Activated CD4-positive, alpha-beta T cell treated with anti-CD3 and anti-CD28 coated beads, Interleukin-2, amount 10 ng/mL, durations not matched to agents 24 days and 14 days (primary cell): ENCODE measurements at regions of chr16 and their contacts with region 1.

Region 1: DNA sequence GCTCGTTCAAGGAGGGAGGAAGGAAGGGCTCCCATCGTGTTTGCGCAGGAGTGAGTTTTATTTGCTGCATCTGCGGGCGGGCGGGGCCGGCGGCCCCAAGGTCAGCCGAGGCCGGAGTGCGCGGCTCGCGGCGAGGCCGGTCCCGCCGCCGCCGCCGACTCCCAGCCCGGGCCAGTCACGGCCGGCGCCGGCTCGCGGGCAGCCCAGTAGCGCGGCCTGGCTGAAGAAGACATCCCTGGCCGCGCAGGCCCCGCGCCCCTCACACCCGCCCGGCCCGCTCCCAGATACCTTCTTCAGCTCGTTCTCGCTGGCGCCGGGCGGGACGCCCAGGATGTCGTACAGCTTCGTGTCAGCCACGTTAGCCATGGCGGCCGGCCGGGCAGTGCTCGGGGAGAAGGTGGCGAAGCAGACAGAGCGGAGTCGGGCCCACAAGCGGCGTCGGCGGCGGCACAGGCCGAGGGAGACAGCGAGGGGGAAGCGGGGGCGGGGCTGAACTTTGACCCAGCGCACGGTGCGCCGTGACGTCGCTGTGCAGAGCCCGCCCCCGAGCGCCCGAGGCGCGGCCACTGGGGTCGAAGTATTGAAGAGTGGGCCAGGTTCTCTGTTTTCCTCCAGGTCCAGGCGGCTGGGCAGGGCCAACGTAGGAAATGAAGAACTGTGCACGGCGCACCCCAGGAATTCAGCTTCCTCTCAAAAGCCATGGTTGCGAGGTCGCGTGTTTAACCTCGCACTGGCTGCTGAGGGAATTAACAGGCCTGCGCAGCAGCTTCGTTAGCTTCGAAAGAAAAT is at the start of gene DNAJA2:
- DNase-seq: peak; percentile 97
- H3K4me3 Mint-ChIP-seq: peak within 1 kb of the TSS; percentile 98
- H3K27ac Mint-ChIP-seq: peak within 1 kb of the TSS; percentile 98
- H3K4me1 Mint-ChIP-seq: peaks cover 48% of the 10 kb centered on the region
- H3K27me3 Mint-ChIP-seq: no peaks in the 10 kb centered on the region
- total RNA-seq, gene DNAJA2: 81.7 and 84.2 TPM in 2 replicates

Region 2: GRCh38 chr16:46689365-46690280 is 283.8 kb before region 1 on chr16 and contains the start of gene ORC6:
- intact Hi-C with region 1: loop called (anchors 1 kb)
- DNase-seq: peak; percentile 99
- H3K4me3 Mint-ChIP-seq: no peak within 1 kb of the TSS
- H3K27ac Mint-ChIP-seq: no peak within 1 kb of the TSS
- H3K4me1 Mint-ChIP-seq: peaks cover 34% of the 10 kb centered on the region
- H3K27me3 Mint-ChIP-seq: no peaks in the 10 kb centered on the region
- total RNA-seq, gene ORC6: 64.3 and 66.3 TPM in 2 replicates

Region 3: GRCh38 chr16:46757339-46758050 is 215.9 kb before region 1 on chr16:
- intact Hi-C with region 1: no loop called
- DNase-seq: no peak
- H3K4me3 Mint-ChIP-seq: no peak overlapping the region
- H3K27ac Mint-ChIP-seq: no peak overlapping the region
- H3K4me1 Mint-ChIP-seq: no peaks in the 10 kb centered on the region
- H3K27me3 Mint-ChIP-seq: no peaks in the 10 kb centered on the region

Region 4: DNA sequence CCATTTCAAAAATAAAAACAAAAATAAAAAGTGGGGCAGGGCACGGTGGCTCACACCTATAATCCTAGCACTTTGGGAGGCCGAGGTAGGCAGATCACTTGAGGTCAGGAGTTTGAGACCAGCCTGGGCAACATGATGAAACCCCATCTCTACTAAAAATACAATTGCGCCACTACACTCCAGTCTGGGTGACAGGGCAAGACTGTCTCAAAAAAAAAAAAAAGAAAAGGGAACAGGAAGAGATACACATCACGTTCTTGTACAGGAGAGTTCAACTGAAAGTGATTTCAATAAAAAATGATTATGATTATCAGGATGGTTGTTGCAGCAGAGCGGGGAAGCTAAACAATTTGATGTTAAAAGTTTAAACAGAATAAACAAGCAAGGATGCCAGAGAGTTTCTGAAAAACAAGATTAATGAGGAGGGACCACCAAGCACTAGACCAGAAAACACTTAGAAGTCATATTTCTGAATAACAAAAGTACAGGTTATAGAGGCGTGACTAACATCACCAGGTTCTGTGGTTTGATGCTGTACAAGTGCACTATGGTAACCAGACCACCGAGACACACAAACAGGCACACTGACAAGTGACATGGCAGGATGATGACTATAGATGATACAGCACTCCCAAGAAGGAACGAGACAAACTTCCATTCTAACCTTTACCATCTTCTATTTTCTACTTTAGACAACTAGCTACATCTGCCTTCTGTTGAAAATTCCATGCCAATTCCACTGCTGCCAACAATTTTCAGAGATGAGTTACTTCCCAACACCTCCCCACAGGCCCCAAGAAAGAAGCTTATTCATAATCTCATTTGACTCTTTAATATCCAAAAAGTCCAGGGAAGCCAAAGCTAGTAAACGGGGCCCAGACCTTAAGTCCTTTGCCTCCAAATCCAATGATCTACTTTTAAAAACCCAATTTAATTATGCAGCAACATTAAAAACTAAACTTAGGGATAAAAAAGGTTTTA is 11.7 kb before region 1 on chr16:
- intact Hi-C with region 1: loop called (anchors 1 kb)
- DNase-seq: no peak
- H3K4me3 Mint-ChIP-seq: no peak overlapping the region
- H3K27ac Mint-ChIP-seq: peak overlapping the region; percentile 73
- H3K4me1 Mint-ChIP-seq: peaks cover 18% of the 10 kb centered on the region
- H3K27me3 Mint-ChIP-seq: no peaks in the 10 kb centered on the region

Region 5: GRCh38 chr16:47037746-47038458 is 64.5 kb after region 1 on chr16:
- intact Hi-C with region 1: loop called (anchors 2 kb)
- DNase-seq: peak; percentile 97
- H3K4me3 Mint-ChIP-seq: peak overlapping the region; percentile 82
- H3K27ac Mint-ChIP-seq: no peak overlapping the region
- H3K4me1 Mint-ChIP-seq: peaks cover 4% of the 10 kb centered on the region
- H3K27me3 Mint-ChIP-seq: peaks cover 14% of the 10 kb centered on the region

Region 6: GRCh38 chr16:48244080-48244862 is 1270.9 kb after region 1 on chr16 and contains the start of gene LONP2:
- intact Hi-C with region 1: loop called (anchors 5 kb)
- DNase-seq: peak; percentile 98
- H3K4me3 Mint-ChIP-seq: peak within 1 kb of the TSS; percentile 90
- H3K27ac Mint-ChIP-seq: peak within 1 kb of the TSS; percentile 91
- H3K4me1 Mint-ChIP-seq: peaks cover 16% of the 10 kb centered on the region
- H3K27me3 Mint-ChIP-seq: peaks cover 2% of the 10 kb centered on the region
- total RNA-seq, gene LONP2: 57.3 and 58.9 TPM in 2 replicates